Vagina (tissue), 2 donors: ENCODE measurements at regions of chr14 and their contacts with region 1.

Region 1: GRCh38 chr14:60656686-60657455 is 7.6 kb upstream of the SIX1 start:
- DNase-seq: no peak
- H3K4me3 ChIP-seq: peak overlapping the region; percentile 47 to 49
- H3K27ac ChIP-seq: no peak overlapping the region
- H3K4me1 ChIP-seq: peaks cover 35% of the 10 kb centered on the region
- H3K27me3 ChIP-seq: peaks cover 21% of the 10 kb centered on the region
- CTCF ChIP-seq: no peak
- POLR2A ChIP-seq: no peak

Region 2: GRCh38 chr14:60616461-60616959 is 40.4 kb before region 1 on chr14:
- intact Hi-C with region 1: no loop called
- DNase-seq: no peak
- H3K4me3 ChIP-seq: no peak overlapping the region
- H3K27ac ChIP-seq: no peak overlapping the region
- H3K4me1 ChIP-seq: no peaks in the 10 kb centered on the region
- H3K27me3 ChIP-seq: no peaks in the 10 kb centered on the region
- CTCF ChIP-seq: no peak
- POLR2A ChIP-seq: no peak

Region 3: DNA sequence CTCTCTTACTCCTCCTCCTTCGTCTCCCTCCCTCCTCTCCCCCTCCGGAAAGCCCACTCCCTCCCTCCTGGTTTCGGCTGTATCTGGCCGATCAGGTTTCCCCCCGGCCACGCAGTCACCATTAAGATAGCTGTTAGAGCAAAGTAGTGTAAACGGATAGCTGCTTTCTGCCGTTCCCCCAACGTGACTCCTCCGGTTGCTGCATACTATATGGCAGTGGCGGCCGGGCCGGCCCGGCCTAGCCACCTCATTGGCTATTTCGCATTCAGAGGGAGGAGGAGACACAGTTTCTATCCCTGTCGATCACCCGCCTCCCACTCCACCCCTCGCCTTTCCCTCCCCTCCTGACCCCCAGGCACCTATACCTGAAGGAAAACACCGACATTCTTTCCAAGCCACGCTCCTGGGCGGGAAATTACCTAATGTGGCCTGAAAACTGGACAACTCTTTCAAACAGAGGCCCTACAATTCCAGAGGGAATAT is 67.3 kb after region 1 on chr14 and contains the start of gene SIX4:
- intact Hi-C with region 1: loop called (anchors 5 kb)
- DNase-seq: no peak
- H3K4me3 ChIP-seq: peak within 1 kb of the TSS; percentile 60 to 66
- H3K27ac ChIP-seq: peak within 1 kb of the TSS; percentile 56
- H3K4me1 ChIP-seq: peaks cover 29% of the 10 kb centered on the region
- H3K27me3 ChIP-seq: no peaks in the 10 kb centered on the region
- CTCF ChIP-seq: no peak
- POLR2A ChIP-seq: no peak
- total RNA-seq, gene SIX4: 1.5 TPM

Region 4: GRCh38 chr14:61296719-61297502 is 640.0 kb after region 1 on chr14:
- intact Hi-C with region 1: no loop called
- DNase-seq: no peak
- H3K4me3 ChIP-seq: no peak overlapping the region
- H3K27ac ChIP-seq: no peak overlapping the region
- H3K4me1 ChIP-seq: peaks cover 6% of the 10 kb centered on the region
- H3K27me3 ChIP-seq: no peaks in the 10 kb centered on the region
- CTCF ChIP-seq: peak; percentile 21 to 57 (median 49)
- POLR2A ChIP-seq: no peak